ENCODE measurements at regions of chr10 and their contacts with region 1.

Region 1: GRCh38 chr10:34628174-34628796 is 186.8 kb downstream of the PARD3 start:
- DNase-seq: no peak
- H3K4me3 ChIP-seq: no peak overlapping the region
- H3K27ac ChIP-seq: no peak overlapping the region
- H3K4me1 ChIP-seq: peaks cover 9 to 35% (median 27%) of the 10 kb centered on the region in 4 donors
- H3K27me3 ChIP-seq: no peaks in the 10 kb centered on the region
- CTCF ChIP-seq: no peak
- EP300 ChIP-seq: no peak
- POLR2A ChIP-seq: no peak

Region 2: GRCh38 chr10:34538281-34538829 is 89.9 kb before region 1 on chr10:
- intact Hi-C with region 1: loop called (anchors 10 kb)
- DNase-seq: no peak
- H3K4me3 ChIP-seq: no peak overlapping the region
- H3K27ac ChIP-seq: peak overlapping the region in 1 of 4 donors; percentile 1
- H3K4me1 ChIP-seq: peaks cover 28 to 37% (median 34%) of the 10 kb centered on the region in 4 donors
- H3K27me3 ChIP-seq: no peaks in the 10 kb centered on the region
- CTCF ChIP-seq: no peak
- EP300 ChIP-seq: no peak
- POLR2A ChIP-seq: no peak

Region 3: DNA sequence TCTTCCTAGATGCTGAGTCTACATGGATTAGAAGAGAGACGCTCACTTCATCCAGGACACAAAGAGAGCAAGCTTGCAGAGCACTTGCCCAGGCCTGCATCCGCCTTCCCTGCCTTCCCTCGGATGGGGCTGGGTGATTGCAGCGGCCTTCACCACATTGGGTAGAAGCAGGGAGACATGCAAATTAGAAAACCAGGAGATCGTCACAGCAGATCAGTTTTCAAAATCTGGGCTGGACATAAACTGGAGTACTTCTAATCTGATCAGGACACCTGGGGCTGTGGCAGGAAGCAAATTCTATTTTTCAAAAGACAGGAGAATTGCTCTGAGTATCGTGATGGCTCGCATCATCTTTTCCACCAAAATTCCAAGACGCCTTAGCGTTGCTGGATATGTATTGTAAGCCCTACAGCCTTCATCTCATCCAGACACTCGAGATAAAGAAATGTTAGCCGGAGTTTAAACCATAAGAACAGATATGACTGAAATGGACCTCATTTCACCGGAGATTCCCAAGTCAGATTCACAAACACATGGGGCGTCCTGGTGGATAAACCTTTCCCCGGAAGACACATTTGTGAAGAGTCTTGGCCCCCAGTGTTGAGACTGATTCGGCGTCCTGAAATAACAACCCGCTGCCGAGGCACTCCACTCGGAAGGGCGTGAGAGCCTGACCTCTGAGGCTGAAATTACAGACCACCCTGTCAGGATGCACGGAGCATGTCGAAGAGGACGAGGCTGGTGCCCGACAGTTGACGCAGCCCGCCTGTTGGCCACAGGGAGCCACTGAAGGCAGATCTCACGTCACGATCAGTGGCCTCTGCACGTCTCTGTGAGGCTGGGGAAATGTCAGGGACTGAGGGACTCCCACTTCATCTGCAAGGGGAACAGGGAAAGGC is 278.0 kb after region 1 on chr10:
- intact Hi-C with region 1: no loop called
- DNase-seq: no peak
- H3K4me3 ChIP-seq: no peak overlapping the region
- H3K27ac ChIP-seq: no peak overlapping the region
- H3K4me1 ChIP-seq: peaks cover 4 to 27% (median 22%) of the 10 kb centered on the region in 4 donors
- H3K27me3 ChIP-seq: no peaks in the 10 kb centered on the region
- CTCF ChIP-seq: no peak
- EP300 ChIP-seq: no peak
- POLR2A ChIP-seq: no peak

Measured in esophagus muscularis mucosa (tissue), 4 donors.